ENCODE measurements at regions of chr2 and their contacts with region 1.

Region 1: DNA sequence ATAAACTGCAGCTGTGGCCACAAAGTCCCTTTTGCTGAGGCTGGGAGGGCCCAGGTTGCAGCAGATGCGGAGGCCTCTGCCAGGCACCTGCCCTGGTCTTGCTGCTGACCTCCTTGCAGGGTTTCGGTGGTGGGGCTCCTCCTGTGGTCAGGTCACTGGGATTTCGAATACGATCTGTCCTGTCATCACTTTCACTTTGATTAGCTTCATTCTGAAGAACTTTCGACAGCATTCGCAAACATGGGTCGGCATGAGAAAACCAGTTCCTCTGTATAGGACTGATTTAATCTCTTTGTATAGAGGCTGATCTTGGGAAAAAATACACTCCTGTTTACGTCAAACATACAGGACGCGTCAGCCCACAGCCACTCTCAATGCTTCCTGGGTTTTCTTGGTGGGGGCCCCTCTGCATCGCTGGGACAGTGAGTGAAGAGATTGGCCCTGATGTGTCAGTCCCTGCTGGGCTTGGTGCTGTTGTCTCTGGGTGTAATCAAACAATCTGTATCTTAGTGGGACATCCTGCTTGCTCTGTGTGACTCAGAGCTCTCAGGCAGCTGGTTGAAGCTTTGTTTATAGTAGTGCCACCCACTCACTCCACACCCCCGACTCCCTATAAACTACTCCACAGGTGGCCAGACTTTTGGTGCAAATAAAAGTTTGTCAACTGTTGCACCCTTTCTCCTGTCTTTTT is 209.4 kb upstream of the CXCR4 start:
- DNase-seq: peak; percentile 76
- H3K4me3 Mint-ChIP-seq: peak overlapping the region; percentile 57
- H3K27ac Mint-ChIP-seq: peak overlapping the region; percentile 93
- H3K4me1 Mint-ChIP-seq: peaks cover 62% of the 10 kb centered on the region
- H3K27me3 Mint-ChIP-seq: no peaks in the 10 kb centered on the region

Region 2: DNA sequence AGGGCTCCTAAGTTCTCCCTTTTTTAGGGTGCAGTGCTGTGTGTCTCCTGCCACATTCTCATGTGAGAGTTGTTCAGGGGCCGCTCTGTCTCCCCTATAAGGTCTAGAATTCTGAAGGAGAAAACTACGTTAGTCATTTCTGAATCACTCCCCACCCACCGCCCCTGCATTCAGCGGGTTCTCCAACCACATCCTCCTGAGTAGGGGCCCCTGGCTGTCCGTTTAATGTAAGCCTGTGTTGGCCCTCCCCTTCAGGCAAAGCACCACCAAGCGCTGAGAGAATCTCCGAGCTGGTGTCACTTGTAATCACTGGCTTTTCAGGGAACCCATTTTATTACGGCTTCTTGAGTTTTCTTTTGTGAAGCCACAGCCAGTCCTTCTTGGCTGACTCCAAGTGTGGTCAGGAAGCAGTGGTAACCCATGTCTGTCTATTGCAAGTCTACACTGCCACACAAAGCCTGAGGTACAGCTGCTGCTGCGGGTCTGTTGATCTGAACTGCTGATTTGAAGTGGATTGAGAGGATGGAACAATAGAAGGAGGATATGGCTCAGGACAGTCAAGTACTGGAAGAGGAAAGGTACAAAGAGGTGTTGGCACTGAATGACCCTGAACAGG is 507.2 kb before region 1 on chr2:
- intact Hi-C with region 1: loop called (anchors 1 kb)
- DNase-seq: peak; percentile 80
- H3K4me3 Mint-ChIP-seq: peak overlapping the region; percentile 71
- H3K27ac Mint-ChIP-seq: peak overlapping the region; percentile 87
- H3K4me1 Mint-ChIP-seq: peaks cover 39% of the 10 kb centered on the region
- H3K27me3 Mint-ChIP-seq: no peaks in the 10 kb centered on the region

Region 3: GRCh38 chr2:135960656-135961551 is 366.4 kb before region 1 on chr2:
- intact Hi-C with region 1: loop called (anchors 1 kb)
- DNase-seq: peak; percentile 32
- H3K4me3 Mint-ChIP-seq: peak overlapping the region; percentile 66
- H3K27ac Mint-ChIP-seq: peak overlapping the region; percentile 96
- H3K4me1 Mint-ChIP-seq: peaks cover 57% of the 10 kb centered on the region
- H3K27me3 Mint-ChIP-seq: no peaks in the 10 kb centered on the region

Region 4: DNA sequence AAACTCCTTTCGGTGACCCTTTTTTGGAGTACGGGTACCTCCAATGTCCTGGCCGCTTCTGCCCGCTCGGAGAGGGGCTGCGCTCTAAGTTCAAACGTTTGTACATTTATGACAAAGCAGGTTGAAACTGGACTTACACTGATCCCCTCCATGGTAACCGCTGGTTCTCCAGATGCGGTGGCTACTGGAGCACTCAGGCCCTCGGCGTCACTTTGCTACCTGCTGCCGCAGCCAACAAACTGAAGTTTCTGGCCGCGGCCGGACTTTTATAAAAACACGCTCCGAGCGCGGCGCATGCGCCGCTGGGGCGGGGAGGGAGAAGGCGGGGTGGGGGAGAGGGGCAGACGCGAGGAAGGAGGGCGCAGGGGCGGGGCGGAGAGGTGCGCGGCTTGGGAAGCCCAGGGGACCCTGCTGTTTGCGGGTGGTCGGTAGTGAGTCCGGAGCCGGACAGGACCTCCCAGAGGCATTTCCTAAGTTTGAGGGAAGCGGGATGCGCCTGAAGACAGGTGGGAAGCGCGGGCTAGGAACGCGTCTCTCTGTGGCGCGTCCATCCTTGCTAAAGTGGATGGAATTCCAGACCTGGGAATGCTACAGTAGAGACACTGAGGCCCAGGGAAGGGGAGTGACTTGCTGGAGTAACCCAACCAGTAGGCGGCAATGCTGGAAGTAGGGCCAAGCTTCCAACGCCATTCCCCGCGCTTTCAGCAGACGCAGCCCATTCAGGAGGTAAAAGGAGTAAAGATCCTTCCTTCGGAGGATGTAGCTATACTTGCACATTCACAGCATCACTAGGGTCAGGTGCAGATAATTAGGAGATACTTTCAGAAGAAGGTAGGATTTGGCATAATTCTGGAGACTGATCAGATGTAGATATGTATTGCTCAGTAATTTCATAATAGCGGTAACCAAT is 209.1 kb before region 1 on chr2 and contains the start of gene CXCR4:
- intact Hi-C with region 1: loop called (anchors 1 kb)
- DNase-seq: peak; percentile 81
- H3K4me3 Mint-ChIP-seq: peak within 1 kb of the TSS; percentile 97
- H3K27ac Mint-ChIP-seq: peak within 1 kb of the TSS; percentile 96
- H3K4me1 Mint-ChIP-seq: peaks cover 49% of the 10 kb centered on the region
- H3K27me3 Mint-ChIP-seq: peaks cover 21% of the 10 kb centered on the region
- total RNA-seq, gene CXCR4: 140 and 144 TPM in 2 replicates

Region 5: DNA sequence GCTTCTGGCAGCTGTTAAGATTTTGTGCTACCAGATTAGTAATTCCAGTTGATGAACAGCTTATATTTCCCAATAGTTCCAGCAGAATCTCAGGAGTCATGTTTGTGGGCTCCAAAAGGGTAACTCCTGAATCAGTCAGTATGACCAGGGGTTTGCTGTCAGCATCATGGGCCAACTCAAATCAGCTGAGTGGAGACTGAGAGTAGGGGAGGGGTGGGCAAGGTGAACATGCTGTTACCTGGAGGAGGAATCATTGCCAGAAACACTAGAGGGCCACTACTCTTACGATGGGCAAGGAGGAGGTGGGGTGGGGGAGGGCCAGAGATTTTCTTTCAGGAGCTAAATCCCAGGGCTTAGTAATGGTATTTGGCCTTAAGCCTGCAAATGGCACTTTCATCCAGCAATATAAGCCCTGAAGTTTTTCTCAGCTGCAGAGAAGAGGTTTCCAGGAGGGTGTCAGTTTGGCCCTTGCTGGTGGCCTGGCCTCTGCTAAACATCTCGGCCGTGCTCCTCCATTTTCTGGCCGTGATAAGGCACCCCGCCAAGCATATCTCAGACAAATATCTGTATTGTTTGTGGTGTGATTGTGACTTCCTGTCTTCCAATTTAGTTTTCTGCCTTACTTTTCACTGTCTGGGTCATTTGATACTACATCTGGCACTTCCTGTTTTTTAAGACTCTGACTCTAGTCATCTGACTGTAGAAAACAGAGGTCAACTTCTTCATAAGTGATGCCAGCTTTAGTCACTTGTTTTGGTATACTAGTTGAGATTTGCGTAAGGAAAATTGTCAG is 88.8 kb before region 1 on chr2:
- intact Hi-C with region 1: loop called (anchors 1 kb)
- DNase-seq: peak; percentile 20
- H3K4me3 Mint-ChIP-seq: no peak overlapping the region
- H3K27ac Mint-ChIP-seq: peak overlapping the region; percentile 88
- H3K4me1 Mint-ChIP-seq: peaks cover 53% of the 10 kb centered on the region
- H3K27me3 Mint-ChIP-seq: no peaks in the 10 kb centered on the region

Region 6: DNA sequence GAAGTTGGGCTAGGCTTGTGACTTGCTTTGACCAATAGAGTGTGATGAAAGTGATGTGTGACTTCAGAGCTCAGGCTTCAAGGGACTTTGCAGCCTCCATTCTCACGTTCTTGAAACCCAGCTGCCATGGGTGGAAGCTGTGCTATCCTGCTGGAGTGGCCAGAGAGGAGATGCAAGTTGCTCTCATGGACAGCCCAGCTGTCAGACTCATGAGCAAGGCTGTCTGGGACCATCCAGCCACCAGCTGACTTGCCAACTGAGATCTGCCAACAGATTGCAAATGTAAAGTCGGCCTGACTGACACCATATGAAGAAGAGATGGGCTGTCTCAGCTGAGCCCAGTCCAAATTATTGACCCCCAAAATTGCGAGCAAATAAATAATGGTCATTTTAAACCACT is 17.0 kb after region 1 on chr2:
- intact Hi-C with region 1: no loop called
- DNase-seq: no peak
- H3K4me3 Mint-ChIP-seq: no peak overlapping the region
- H3K27ac Mint-ChIP-seq: no peak overlapping the region
- H3K4me1 Mint-ChIP-seq: no peaks in the 10 kb centered on the region
- H3K27me3 Mint-ChIP-seq: no peaks in the 10 kb centered on the region

Region 7: GRCh38 chr2:136362676-136363390 is 35.5 kb after region 1 on chr2:
- intact Hi-C with region 1: loop called (anchors 1 kb)
- DNase-seq: no peak
- H3K4me3 Mint-ChIP-seq: peak overlapping the region; percentile 2
- H3K27ac Mint-ChIP-seq: peak overlapping the region; percentile 35
- H3K4me1 Mint-ChIP-seq: peaks cover 49% of the 10 kb centered on the region
- H3K27me3 Mint-ChIP-seq: peaks cover 1% of the 10 kb centered on the region

Measured in activated T-helper 2 cell treated with anti-CD3 and anti-CD28 coated beads, Interferon-gamma antibody, Interleukin-2, Interleukin-4, amounts not matched to agents 10 μg/mL and 5 μg/mL and 100 μg/mL, durations not matched to agents 14 hours and 24 hours and 36 hours (primary cell).